ENCODE measurements at regions of chr13 and their contacts with region 1.

Region 1: DNA sequence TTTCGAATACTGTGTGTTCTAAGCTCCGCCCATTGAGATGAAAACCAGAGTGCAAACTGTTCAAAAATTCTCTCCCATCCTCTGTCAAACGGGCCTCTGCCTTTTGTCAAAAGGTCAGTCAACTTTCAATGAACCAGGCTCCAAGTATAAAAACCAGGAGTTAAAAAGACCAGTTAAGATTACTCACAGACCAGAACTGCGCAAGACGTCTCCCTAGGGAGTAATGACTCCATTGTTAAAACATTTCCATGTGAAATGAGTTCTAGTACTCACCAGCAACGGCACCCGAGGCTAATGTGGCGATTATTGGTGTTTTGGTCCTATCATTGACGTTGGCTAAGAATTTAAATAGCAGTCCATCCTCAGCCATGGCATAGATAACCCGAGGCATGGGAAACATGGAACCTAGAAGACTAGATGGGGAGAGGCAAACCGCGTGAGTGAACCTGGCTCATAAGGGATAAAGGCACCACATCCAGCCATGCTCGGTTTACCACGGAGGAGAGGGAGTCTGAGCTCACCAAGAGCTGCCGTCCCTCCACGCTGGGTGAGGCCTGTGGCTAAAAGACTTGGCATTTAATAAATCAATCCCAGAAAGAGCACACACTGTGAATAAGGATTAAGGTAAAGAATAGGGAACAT is 73.3 kb downstream of the SLC7A1 start:
- DNase-seq: no peak
- ATAC-seq: peak; percentile 53
- H3K4me3 ChIP-seq: no peak overlapping the region
- H3K27ac ChIP-seq: peak overlapping the region in 1 of 2 donors; percentile 30
- H3K4me1 ChIP-seq: peaks cover 0 to 2% of the 10 kb centered on the region in 2 donors
- H3K27me3 ChIP-seq: no peaks in the 10 kb centered on the region

Region 2: DNA sequence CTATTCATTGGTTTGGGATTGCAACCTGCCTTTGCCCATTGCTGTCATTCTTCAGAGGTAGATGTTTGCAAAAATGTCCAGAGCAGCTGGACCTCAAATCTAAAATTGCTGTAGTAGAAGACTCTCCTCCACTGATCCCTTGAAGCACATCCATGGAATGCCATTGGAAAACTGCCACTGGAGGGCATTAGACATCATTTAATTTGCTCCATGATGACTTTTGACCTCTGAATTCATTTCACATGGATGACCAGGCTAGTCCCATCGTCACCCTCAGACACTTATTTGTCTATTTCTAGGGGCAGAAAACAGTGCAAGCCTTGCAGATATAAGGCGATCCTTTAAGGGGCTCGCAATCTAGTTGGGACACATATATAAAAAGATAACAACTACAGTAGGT is 993.3 kb before region 1 on chr13:
- intact Hi-C with region 1: no loop called
- DNase-seq: no peak
- ATAC-seq: no peak
- H3K4me3 ChIP-seq: no peak overlapping the region
- H3K27ac ChIP-seq: no peak overlapping the region
- H3K4me1 ChIP-seq: no peaks in the 10 kb centered on the region
- H3K27me3 ChIP-seq: no peaks in the 10 kb centered on the region

Region 3: DNA sequence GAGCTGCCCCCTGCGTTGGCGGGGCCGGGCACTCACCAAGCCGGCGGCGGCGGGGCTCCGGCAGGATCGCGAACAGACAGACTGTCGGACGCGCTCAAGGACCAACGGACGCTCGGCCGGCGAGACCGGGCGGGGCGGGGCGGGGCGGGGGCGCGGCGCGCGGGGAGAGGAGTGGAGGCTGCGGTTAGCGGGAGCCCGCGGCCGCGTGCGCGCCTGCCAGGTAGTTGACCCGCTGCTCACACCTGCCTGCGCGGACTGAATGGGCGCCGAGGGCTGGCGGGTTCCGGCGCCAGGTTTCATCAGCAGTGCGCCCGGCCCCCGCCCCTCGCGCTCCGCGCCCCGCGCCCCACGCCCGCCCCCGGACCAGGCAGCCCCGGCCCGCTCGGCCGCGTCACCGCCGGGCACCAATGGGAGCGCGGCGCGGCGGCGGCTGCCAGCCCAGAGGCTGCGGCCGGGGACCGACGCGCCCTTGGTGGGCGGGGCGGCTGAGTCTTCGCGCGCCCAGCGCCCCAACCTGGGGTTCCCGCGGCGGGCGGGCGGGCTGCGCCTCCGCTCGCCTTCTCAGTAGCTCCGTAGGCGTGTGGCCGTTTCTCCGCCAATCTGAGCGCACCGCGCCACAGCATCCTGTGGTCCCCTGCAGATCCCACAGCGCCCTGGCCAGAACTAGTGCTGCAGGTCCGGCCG is 73.4 kb after region 1 on chr13 and contains the start of gene SLC7A1:
- intact Hi-C with region 1: loop called (anchors 5 kb)
- DNase-seq: peak; percentile 84 to 94
- ATAC-seq: peak; percentile 92
- H3K4me3 ChIP-seq: peak within 1 kb of the TSS; percentile 93 to 96
- H3K27ac ChIP-seq: peak within 1 kb of the TSS; percentile 81 to 87
- H3K4me1 ChIP-seq: no peaks in the 10 kb centered on the region
- H3K27me3 ChIP-seq: no peaks in the 10 kb centered on the region
- total RNA-seq, gene SLC7A1: 29.3 to 52.1 TPM